Sigmoid colon (tissue), 7 donors: ENCODE measurements at regions of chr11 and their contacts with region 1.

Region 1: GRCh38 chr11:27012234-27012921 is 18.5 kb downstream of the FIBIN start:
- DNase-seq: no peak
- H3K4me3 ChIP-seq: no peak overlapping the region
- H3K27ac ChIP-seq: peak overlapping the region in 3 of 4 donors; percentile 57 to 71 (median 65)
- H3K4me1 ChIP-seq: peaks cover 0 to 35% (median 31%) of the 10 kb centered on the region in 4 donors
- H3K27me3 ChIP-seq: no peaks in the 10 kb centered on the region
- CTCF ChIP-seq: no peak
- EP300 ChIP-seq: no peak
- POLR2A ChIP-seq: no peak

Region 2: DNA sequence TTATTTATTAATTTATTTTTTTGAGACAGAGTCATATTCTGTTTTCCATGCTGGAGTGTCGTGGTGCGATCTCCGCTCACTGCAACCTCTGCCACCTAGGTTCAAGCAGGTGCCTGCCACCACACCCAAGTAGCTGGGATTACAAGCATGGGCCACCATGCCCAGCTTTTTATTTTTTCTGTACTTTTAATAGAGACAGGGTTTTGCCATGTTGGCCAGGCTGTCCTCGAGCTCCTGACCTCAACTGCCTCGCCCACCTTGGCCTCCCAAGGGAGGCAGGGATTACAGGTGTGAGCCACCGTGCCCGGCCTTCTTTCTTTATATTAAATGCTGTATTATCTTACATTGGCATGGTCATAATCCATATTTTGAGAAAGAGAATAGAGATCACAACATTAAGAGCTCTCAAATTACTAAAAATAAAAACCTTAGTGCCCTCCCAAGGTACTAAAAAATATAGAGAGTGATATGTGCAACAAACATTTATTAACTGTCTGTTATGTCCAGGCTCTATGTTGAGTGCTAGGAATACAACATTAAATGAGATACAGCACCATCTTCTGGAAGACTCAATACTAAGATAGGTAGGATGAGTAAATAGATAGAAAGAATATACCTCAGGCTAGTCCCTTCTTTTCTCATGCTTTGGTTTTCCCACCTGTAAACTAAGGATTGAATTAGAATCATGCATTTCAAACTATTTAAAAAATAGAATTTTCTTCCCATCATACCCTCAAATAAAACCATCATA is 112.3 kb after region 1 on chr11:
- intact Hi-C with region 1: loop called (anchors 10 kb)
- DNase-seq: no peak
- H3K4me3 ChIP-seq: no peak overlapping the region
- H3K27ac ChIP-seq: no peak overlapping the region
- H3K4me1 ChIP-seq: no peaks in the 10 kb centered on the region
- H3K27me3 ChIP-seq: no peaks in the 10 kb centered on the region
- CTCF ChIP-seq: peak in 1 of 4 experiments; percentile 20
- EP300 ChIP-seq: no peak
- POLR2A ChIP-seq: no peak